Left ventricle myocardium inferior (tissue), 1 donor: ENCODE measurements at regions of chr3 and their contacts with region 1.

Region 1: GRCh38 chr3:150868282-150868681 is 37.0 kb downstream of the MINDY4B start:
- DNase-seq: no peak
- H3K4me3 ChIP-seq: no peak overlapping the region
- H3K27ac ChIP-seq: no peak overlapping the region
- H3K4me1 ChIP-seq: no peaks in the 10 kb centered on the region
- H3K27me3 ChIP-seq: no peaks in the 10 kb centered on the region
- CTCF ChIP-seq: no peak

Region 2: DNA sequence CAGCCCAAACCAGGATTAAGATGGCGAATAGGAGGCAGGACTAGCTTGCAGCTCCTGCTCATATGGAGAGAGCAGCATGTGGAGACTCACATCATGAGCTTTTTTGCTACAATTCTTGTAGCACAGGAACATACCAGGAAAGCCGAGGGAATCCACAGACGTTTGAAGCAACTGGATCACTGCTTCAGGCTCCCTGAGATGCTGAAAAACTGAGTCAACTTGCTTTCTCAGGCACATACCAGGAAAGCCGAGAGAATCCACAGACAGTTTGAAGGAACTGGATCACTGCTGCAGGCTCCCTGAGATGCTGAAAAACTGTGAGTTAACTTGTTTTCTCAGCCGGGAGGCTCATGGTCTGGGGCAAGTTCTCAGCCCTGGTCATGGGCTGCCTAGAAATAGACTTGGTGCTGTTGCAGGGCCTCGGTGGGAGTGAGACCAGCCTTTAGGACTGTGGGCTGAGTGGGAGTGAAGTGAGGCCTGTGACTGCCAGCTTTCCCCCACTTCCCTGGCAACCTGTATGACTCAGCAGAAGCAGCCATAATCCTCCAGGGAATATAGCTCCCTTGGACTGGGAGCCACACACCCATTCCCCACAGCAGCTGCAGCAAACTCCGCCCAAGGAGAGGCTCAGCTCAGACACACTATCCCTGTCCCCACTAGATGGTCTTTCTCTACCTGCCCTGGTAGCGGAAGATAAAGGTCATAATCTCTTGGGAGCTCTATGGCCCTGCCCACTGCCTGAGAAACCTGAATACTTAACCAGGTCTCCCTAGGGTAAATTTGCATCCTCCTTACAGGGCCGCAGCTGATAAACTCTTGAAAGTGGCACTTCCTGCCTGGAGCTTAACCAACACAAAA is 845.7 kb before region 1 on chr3:
- intact Hi-C with region 1: no loop called
- DNase-seq: no peak
- H3K4me3 ChIP-seq: no peak overlapping the region
- H3K27ac ChIP-seq: no peak overlapping the region
- H3K4me1 ChIP-seq: no peaks in the 10 kb centered on the region
- H3K27me3 ChIP-seq: no peaks in the 10 kb centered on the region
- CTCF ChIP-seq: no peak

Region 3: GRCh38 chr3:150721285-150722130 is 146.8 kb before region 1 on chr3:
- intact Hi-C with region 1: loop called (anchors 5 kb)
- DNase-seq: no peak
- H3K4me3 ChIP-seq: peak overlapping the region; percentile 17
- H3K27ac ChIP-seq: no peak overlapping the region
- H3K4me1 ChIP-seq: peaks cover 5% of the 10 kb centered on the region
- H3K27me3 ChIP-seq: no peaks in the 10 kb centered on the region
- CTCF ChIP-seq: peak; percentile 89